Dendritic cell treated with granulocyte-macrophage colony-stimulating factor and Interleukin-4, amounts not matched to agents 40 ng/mL and 50 ng/mL, for 4 days (primary cell): ENCODE measurements at regions of chr3 and their contacts with region 1.

Region 1: GRCh38 chr3:150763122-150763841 is at the start of gene SIAH2:
- H3K4me3 Mint-ChIP-seq: peak within 1 kb of the TSS; percentile 94
- H3K27ac Mint-ChIP-seq: peak within 1 kb of the TSS; percentile 98
- H3K4me1 Mint-ChIP-seq: peaks cover 35% of the 10 kb centered on the region
- H3K27me3 Mint-ChIP-seq: no peaks in the 10 kb centered on the region

Region 2: DNA sequence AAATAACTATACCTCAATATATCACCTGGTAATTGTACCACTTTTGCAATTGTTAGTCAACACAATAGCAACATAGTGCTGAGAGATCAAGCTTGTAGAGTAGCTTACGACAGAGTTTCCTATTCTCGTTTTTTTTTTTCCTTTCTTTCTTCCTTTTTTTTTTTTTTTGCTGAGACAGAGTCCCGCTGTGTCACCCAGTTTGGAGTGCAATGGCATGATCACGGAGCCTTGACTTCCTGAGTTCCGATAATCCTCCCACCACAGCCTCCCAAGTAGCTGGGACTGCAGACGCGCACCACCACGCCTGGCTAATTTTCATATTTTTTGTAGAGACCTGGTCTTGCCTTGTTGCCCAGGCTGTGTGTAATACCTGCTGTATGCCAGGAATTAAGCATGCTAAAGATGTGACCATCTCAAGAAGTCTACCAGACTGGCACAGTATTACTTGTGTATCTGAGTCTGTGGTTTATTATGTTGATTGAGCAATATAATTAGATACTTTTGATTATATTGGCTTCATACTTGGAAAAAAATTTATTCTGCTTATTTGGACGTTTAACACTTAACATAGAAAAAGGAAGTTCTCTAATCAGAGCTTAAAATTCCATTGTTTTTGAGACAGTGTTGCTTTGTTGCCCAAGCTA is 157.2 kb before region 1 on chr3:
- intact Hi-C with region 1: loop called (anchors 5 kb)
- H3K4me3 Mint-ChIP-seq: peak overlapping the region; percentile 68
- H3K27ac Mint-ChIP-seq: peak overlapping the region; percentile 80
- H3K4me1 Mint-ChIP-seq: peaks cover 69% of the 10 kb centered on the region
- H3K27me3 Mint-ChIP-seq: no peaks in the 10 kb centered on the region